ENCODE measurements at regions of chr12 and their contacts with region 1.

Region 1: DNA sequence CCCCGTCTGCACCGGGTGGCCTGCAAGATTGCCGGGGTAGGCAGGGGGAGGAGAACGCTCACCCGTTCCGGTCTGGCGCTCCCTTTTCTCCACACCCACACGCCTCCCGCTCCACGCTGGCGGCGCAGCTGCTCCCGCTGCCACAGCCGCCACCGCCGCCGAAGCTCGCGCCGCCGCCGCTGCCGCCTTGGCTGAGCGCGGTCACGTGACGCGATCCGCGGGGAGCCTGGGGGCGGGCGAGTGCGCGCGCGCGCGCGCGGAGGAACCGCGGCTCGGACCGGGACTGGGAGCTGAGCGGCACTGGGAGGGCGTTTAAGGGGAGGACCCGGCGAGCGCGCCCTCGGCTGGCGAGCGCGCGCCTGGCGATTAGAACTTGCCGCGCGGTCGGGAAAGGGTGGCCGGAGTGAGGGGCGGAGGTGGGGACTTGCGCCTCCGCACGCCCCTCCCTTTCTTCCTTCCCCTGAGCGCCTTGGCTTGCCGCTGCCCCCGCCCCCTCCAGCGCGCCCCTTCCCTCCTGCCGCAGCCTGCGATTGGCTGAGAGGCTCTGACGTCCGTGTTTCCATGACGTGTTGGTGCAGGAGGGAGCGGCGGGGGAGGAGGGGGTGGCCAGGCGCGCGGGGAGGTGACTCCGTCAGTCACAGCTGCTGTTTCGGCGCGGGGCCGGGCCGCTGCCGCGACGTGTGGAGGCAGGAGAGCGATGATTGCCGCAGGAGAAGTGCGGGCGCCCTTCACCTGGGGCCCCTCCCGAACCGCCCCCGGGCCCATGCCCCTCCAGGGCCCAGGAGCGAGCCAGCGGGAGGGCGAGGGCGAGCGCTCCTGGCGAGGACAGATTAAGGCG is 738 bp upstream of the ATP2B1 start:
- DNase-seq: peak; percentile 99
- H3K4me3 Mint-ChIP-seq: peak overlapping the region; percentile 85
- H3K27ac Mint-ChIP-seq: peak overlapping the region; percentile 81
- H3K4me1 Mint-ChIP-seq: peaks cover 25% of the 10 kb centered on the region
- H3K27me3 Mint-ChIP-seq: peaks cover 6% of the 10 kb centered on the region

Region 2: DNA sequence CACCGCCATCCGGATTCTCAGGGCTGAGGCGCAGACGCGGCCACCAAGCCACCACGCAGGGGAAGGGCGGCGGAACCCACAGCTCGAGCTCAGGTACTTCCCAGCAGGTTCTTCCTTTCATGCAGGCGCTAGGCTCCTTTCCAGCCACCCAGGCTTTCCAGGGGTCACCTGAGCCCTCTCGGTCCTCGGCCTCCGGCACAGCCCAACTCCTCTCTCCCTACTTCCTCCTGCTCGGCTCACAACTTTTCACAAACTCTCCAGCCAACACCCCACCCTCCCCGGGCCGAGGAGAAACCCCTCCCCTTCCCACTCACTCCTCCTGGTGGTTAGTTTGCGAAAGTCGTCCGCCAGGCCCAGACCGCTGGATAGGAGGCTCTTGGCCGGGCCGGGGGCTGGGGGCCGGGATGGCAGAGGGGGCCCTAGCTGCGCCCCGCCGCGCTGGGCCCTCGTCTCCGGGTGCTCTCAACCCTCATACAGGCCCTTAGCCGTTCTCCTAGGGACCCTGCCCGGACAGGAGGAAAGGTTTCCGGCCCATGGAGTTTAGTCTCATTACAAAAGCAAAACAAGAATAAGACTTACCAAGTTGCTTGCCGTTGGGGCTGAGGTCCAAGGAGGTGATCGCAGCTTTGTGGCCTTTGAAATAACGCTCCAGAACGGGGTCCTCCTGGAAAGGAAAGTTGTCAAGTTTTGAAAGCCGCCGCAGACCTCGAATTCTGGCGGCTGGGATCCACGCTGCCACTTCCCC is 184.7 kb before region 1 on chr12 and contains the start of gene GALNT4:
- CTCF ChIA-PET with region 1: no interaction called
- POLR2A ChIA-PET with region 1: interaction called, 25 read pairs
- DNase-seq: peak; percentile 84
- H3K4me3 Mint-ChIP-seq: peak within 1 kb of the TSS; percentile 90
- H3K27ac Mint-ChIP-seq: peak within 1 kb of the TSS; percentile 94
- H3K4me1 Mint-ChIP-seq: peaks cover 69% of the 10 kb centered on the region
- H3K27me3 Mint-ChIP-seq: no peaks in the 10 kb centered on the region
- total RNA-seq, gene GALNT4: 21.5 to 23.3 TPM

Region 3: GRCh38 chr12:89610366-89610765 is 99.0 kb before region 1 on chr12:
- CTCF ChIA-PET with region 1: no interaction called
- POLR2A ChIA-PET with region 1: no interaction called
- DNase-seq: no peak
- H3K4me3 Mint-ChIP-seq: no peak overlapping the region
- H3K27ac Mint-ChIP-seq: no peak overlapping the region
- H3K4me1 Mint-ChIP-seq: no peaks in the 10 kb centered on the region
- H3K27me3 Mint-ChIP-seq: no peaks in the 10 kb centered on the region

Region 4: DNA sequence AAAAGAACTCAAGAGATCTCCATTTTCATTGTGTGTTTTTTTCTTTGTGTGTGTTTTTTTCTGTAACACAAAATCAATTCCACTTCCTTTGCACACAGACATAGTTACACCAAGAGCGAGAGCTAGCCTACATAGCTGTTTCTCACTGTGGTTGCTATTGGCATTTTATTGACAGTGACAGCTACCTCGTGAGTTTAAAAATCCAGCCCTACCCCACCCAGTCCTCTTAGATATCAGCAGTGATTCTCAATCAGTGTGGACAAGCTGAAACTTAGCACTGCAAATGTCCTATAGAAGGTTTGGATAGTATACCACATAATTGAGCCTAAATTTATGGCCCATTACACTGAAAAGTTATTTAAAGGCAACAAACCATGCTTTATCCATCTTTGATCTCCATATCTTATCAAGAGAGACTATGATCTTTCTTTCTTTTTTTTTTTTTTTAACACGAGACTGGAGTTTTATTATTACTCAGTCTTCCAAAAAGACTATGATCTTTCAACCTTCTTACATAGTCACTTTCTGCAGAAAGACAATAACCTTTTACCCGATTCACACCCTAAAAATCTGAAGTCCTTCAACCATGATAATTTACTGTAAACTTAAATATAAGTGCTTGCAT is 47.6 kb before region 1 on chr12:
- CTCF ChIA-PET with region 1: interaction called, 3 read pairs
- POLR2A ChIA-PET with region 1: interaction called, 14 read pairs
- DNase-seq: no peak
- H3K4me3 Mint-ChIP-seq: no peak overlapping the region
- H3K27ac Mint-ChIP-seq: no peak overlapping the region
- H3K4me1 Mint-ChIP-seq: peaks cover 22% of the 10 kb centered on the region
- H3K27me3 Mint-ChIP-seq: no peaks in the 10 kb centered on the region

Region 5: DNA sequence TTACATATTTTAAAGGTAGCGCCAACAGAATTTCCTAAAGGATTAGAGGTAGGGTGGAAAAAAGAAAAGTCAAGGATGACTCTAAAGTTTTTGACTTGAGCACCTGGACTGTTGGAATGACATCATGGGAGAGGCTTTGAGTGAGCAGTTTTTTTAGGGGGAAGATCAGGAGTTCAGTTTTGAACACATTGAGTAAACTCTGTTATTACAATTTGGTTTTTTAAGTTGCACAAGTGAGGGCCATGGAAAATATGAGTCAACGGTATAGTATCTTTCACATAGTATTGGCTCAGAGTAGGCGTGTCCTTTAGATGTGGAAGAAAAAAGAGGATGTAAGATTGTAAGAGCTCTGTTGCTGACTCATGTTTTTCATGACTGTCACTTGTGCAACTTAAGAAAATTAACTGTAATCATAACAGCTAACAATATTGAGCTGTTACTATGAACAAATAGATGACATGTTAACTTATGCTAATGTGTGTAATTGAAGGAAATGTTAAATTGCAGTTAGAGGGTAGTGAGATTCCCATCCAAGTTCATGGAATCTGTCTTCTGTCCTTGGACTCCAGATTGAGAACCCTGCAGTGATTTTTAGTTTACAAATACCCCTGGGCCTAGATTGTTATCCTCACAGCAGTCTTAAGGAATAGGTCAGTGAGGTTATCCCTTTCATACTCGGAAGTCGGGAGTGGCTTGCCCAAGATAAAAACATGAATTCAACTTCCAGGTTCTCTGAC is 47.4 kb after region 1 on chr12:
- CTCF ChIA-PET with region 1: no interaction called
- POLR2A ChIA-PET with region 1: interaction called, 18 read pairs
- DNase-seq: no peak
- H3K4me3 Mint-ChIP-seq: no peak overlapping the region
- H3K27ac Mint-ChIP-seq: peak overlapping the region; percentile 61
- H3K4me1 Mint-ChIP-seq: peaks cover 36% of the 10 kb centered on the region
- H3K27me3 Mint-ChIP-seq: no peaks in the 10 kb centered on the region

Region 6: GRCh38 chr12:89862511-89863179 is 153.3 kb after region 1 on chr12:
- CTCF ChIA-PET with region 1: interaction called, 5 read pairs
- POLR2A ChIA-PET with region 1: interaction called, 61 read pairs
- DNase-seq: peak; percentile 61
- H3K4me3 Mint-ChIP-seq: peak overlapping the region; percentile 67
- H3K27ac Mint-ChIP-seq: peak overlapping the region; percentile 84
- H3K4me1 Mint-ChIP-seq: peaks cover 56% of the 10 kb centered on the region
- H3K27me3 Mint-ChIP-seq: no peaks in the 10 kb centered on the region

Measured in activated CD4-positive, alpha-beta memory T cell treated with anti-CD3 and anti-CD28 coated beads, Interleukin-2, amount 10 ng/mL, durations not matched to agents 7 days and 5 days (primary cell).